A673 (cell line): ENCODE measurements at regions of chr10 and their contacts with region 1.

Region 1: GRCh38 chr10:58952747-58953466 is 223.5 kb upstream of the PHYHIPL start:
- DNase-seq: peak; percentile 57
- H3K4me3 ChIP-seq: no peak overlapping the region
- H3K27ac ChIP-seq: no peak overlapping the region
- H3K4me1 ChIP-seq: no peaks in the 10 kb centered on the region
- H3K27me3 ChIP-seq: no peaks in the 10 kb centered on the region
- CTCF ChIP-seq: peak; percentile 85

Region 2: DNA sequence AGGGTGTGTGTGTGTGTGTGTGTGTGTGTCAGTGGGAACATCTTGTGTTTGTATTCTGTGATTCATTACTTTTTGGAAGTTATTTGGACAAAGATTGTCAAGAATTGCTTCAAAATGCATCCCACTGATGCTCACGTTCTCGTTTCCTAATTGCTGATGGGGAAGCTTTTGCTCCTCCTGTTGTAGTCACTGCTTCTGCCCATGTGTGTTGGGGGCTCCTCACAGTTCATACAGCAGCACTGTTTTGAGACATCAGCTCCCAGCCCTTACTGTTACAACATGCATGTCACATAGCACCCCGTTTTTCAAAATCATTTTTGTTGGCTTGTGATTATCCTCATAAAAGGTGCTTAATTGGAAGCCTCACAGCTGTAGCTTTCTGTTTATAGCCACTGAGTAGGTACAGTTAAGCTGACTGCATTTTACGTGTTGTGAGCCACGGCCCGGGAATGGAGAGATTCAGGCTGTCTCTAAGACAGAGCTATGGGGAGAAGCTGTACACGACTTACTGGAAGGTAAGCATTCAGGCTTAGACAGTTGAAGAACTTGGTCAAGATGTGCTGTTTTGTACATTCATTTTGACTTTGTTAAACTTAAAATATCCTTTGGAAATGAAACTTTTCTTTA is 352.9 kb before region 1 on chr10:
- CTCF ChIA-PET with region 1: no interaction called
- POLR2A ChIA-PET with region 1: no interaction called
- intact Hi-C with region 1: no loop called
- DNase-seq: no peak
- H3K4me3 ChIP-seq: no peak overlapping the region
- H3K27ac ChIP-seq: no peak overlapping the region
- H3K4me1 ChIP-seq: no peaks in the 10 kb centered on the region
- H3K27me3 ChIP-seq: no peaks in the 10 kb centered on the region
- CTCF ChIP-seq: no peak

Region 3: DNA sequence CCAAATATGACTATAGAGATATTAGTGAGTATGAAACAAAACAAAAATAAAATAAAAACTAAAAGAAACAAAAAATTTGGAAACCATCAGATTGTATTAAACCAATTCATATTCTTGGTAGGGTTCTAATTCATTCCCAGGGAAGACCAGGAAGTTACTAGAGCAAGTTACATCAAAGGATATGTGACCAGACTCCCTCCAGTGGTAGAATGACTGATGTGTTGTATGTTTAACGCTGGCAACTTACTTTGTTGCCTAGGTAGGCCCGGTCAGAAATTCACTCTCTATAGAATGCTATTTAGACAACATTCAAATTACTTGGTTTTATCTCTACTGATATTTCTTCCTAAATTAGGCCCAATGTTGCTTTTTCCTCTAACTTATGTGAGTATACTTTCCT is 228.8 kb after region 1 on chr10:
- CTCF ChIA-PET with region 1: no interaction called
- POLR2A ChIA-PET with region 1: no interaction called
- intact Hi-C with region 1: loop called (anchors 1 kb)
- DNase-seq: peak; percentile 58
- H3K4me3 ChIP-seq: no peak overlapping the region
- H3K27ac ChIP-seq: no peak overlapping the region
- H3K4me1 ChIP-seq: no peaks in the 10 kb centered on the region
- H3K27me3 ChIP-seq: peaks cover 31% of the 10 kb centered on the region
- CTCF ChIP-seq: peak; percentile 62

Region 4: GRCh38 chr10:59227136-59227673 is 274.3 kb after region 1 on chr10:
- CTCF ChIA-PET with region 1: no interaction called
- POLR2A ChIA-PET with region 1: no interaction called
- intact Hi-C with region 1: loop called (anchors 5 kb)
- DNase-seq: peak; percentile 12
- H3K4me3 ChIP-seq: no peak overlapping the region
- H3K27ac ChIP-seq: no peak overlapping the region
- H3K4me1 ChIP-seq: no peaks in the 10 kb centered on the region
- H3K27me3 ChIP-seq: no peaks in the 10 kb centered on the region
- CTCF ChIP-seq: peak; percentile 29; the same call in 1 of the 2 replicates

Region 5: DNA sequence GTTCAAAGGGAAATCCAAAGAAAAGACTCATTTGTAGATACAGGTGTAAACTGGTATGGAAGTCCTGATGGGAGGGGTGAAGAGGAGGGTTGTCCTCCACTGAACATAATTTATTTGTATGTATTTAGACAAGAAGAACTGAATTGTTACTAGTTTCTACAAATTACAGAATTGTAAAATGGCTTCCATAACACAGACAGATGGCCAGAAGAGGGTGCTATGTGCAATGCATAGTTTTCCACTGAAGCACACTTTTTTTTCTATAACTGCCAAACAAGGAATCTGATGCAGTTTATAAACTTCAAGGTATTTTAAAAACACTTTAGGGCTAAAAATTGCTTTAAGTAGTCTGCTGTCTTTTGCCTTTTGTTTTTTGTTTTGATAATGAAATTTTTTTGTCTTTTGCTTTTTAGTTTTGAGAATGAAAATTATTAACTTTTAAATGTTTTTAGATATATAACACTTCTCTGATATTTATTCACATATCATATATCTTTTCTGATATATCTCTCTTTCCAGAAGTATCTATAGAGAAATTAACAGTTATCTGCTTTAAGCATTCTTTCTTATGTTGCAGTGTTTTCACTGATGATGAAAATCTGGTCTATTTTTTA is 282.0 kb after region 1 on chr10:
- CTCF ChIA-PET with region 1: interaction called, 3 read pairs
- POLR2A ChIA-PET with region 1: no interaction called
- intact Hi-C with region 1: loop called (anchors 5 kb)
- DNase-seq: peak; percentile 70
- H3K4me3 ChIP-seq: no peak overlapping the region
- H3K27ac ChIP-seq: no peak overlapping the region
- H3K4me1 ChIP-seq: peaks cover under 1% of the 10 kb centered on the region
- H3K27me3 ChIP-seq: no peaks in the 10 kb centered on the region
- CTCF ChIP-seq: peak; percentile 88

Region 6: GRCh38 chr10:59580026-59580863 is 627.3 kb after region 1 on chr10:
- CTCF ChIA-PET with region 1: interaction called, 4 read pairs
- POLR2A ChIA-PET with region 1: no interaction called
- intact Hi-C with region 1: loop called (anchors 2 kb)
- DNase-seq: peak; percentile 81
- H3K4me3 ChIP-seq: no peak overlapping the region
- H3K27ac ChIP-seq: no peak overlapping the region
- H3K4me1 ChIP-seq: peaks cover 15% of the 10 kb centered on the region
- H3K27me3 ChIP-seq: no peaks in the 10 kb centered on the region
- CTCF ChIP-seq: peak; percentile 72

Region 7: DNA sequence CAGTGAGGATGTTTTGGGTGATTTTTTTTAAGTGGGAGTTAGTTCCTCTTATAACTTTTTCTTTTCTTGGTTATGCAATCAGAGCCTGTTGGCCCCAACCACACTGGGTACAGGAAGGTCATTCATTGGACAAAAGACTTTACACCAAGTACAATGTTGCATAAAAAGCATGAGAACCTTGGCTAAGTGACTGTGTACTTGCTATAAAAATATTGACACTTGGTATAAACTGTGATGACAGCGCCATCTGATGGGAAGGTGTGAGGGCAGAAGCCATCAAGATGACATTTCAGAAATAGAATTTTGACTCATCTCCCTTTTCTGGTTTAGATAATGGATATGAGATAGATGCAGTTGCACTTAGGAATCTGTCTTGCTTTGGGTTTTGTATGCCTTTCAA is 1079.8 kb after region 1 on chr10:
- CTCF ChIA-PET with region 1: no interaction called
- POLR2A ChIA-PET with region 1: no interaction called
- intact Hi-C with region 1: loop called (anchors 10 kb)
- DNase-seq: peak; percentile 73
- H3K4me3 ChIP-seq: no peak overlapping the region
- H3K27ac ChIP-seq: no peak overlapping the region
- H3K4me1 ChIP-seq: peaks cover 20% of the 10 kb centered on the region
- H3K27me3 ChIP-seq: peaks cover 49% of the 10 kb centered on the region
- CTCF ChIP-seq: peak; percentile 80

Region 8: GRCh38 chr10:60426400-60426799 is 1473.5 kb after region 1 on chr10:
- CTCF ChIA-PET with region 1: no interaction called
- POLR2A ChIA-PET with region 1: no interaction called
- intact Hi-C with region 1: loop called (anchors 5 kb)
- DNase-seq: peak; percentile 46
- H3K4me3 ChIP-seq: no peak overlapping the region
- H3K27ac ChIP-seq: no peak overlapping the region
- H3K4me1 ChIP-seq: peaks cover 9% of the 10 kb centered on the region
- H3K27me3 ChIP-seq: no peaks in the 10 kb centered on the region
- CTCF ChIP-seq: no peak